Activated CD4-positive, alpha-beta memory T cell treated with anti-CD3 and anti-CD28 coated beads, Interleukin-2, amount 10 ng/mL, durations not matched to agents 7 days and 5 days (primary cell): ENCODE measurements at regions of chr17 and their contacts with region 1.

Region 1: DNA sequence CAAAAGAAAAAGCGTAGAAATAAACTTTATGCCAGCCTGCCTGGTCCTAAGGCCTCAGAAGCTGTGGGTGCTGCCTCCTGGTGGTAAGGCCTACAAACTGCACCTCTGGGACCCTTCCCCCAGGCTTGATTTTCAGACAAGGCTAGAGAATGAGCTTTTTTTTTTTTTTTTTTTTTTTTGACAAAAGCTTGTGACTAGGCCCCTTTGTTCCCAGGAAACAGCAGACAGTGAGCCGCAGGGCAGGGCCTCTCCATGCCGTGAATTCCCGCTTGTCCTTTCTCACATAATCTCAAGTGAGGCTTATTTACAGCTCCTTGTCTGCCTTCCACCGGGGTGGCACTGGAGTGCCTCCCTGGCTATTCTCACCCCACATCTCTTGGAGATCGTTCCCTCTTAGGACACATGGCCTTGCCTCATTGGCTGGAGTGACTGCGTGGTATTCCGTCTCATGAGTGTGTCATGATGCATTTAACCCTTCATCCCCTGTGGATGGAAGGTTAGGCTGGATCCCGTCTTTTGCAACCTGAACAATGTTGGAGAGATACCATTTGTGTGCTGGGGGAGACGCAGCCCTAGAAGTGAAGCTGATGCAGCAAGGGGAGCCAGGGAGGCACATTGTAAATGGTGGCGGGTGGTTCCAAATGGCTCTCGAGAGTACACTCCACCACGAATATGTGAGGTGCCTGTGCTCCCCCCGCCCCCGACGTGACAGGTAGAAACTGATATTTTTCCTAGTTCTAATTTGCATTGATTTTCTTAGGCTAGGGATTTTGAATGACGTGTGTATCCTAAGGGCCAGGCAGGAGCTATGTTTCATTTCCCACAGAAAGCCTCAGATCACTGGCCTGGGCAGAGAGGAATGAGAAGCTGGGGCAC is 49.6 kb downstream of the USP22 start:
- DNase-seq: peak; percentile 65
- H3K4me3 Mint-ChIP-seq: no peak overlapping the region
- H3K27ac Mint-ChIP-seq: no peak overlapping the region
- H3K4me1 Mint-ChIP-seq: no peaks in the 10 kb centered on the region
- H3K27me3 Mint-ChIP-seq: no peaks in the 10 kb centered on the region

Region 2: GRCh38 chr17:20800146-20800545 is 193.1 kb before region 1 on chr17:
- CTCF ChIA-PET with region 1: interaction called, 12 read pairs
- POLR2A ChIA-PET with region 1: interaction called, 4 read pairs
- DNase-seq: no peak
- H3K4me3 Mint-ChIP-seq: no peak overlapping the region
- H3K27ac Mint-ChIP-seq: no peak overlapping the region
- H3K4me1 Mint-ChIP-seq: peaks cover 38% of the 10 kb centered on the region
- H3K27me3 Mint-ChIP-seq: peaks cover under 1% of the 10 kb centered on the region

Region 3: GRCh38 chr17:20952184-20952583 is 41.0 kb before region 1 on chr17:
- CTCF ChIA-PET with region 1: no interaction called
- POLR2A ChIA-PET with region 1: no interaction called
- DNase-seq: no peak
- H3K4me3 Mint-ChIP-seq: no peak overlapping the region
- H3K27ac Mint-ChIP-seq: no peak overlapping the region
- H3K4me1 Mint-ChIP-seq: no peaks in the 10 kb centered on the region
- H3K27me3 Mint-ChIP-seq: peaks cover 18% of the 10 kb centered on the region

Region 4: DNA sequence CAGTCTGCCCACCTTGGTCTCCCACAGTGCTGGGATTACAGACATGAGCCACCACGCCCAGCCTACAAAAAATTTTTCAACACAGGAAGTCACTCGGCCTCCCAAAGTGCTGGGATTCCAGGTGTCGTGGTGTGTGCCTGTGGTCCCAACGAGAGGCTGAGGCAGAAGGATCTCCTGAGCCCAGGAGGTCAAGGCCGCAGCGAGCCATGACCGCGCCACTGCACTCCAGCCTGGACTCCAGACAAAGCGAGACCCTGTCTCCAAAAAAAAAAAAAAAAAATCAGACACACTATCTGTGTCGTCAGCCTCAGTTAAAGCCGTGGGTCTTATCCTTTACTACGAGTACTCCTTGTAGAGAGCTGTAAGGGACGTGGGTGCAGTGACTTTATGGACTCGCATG is 33.8 kb after region 1 on chr17:
- CTCF ChIA-PET with region 1: no interaction called
- POLR2A ChIA-PET with region 1: no interaction called
- DNase-seq: no peak
- H3K4me3 Mint-ChIP-seq: no peak overlapping the region
- H3K27ac Mint-ChIP-seq: no peak overlapping the region
- H3K4me1 Mint-ChIP-seq: peaks cover 66% of the 10 kb centered on the region
- H3K27me3 Mint-ChIP-seq: no peaks in the 10 kb centered on the region

Region 5: DNA sequence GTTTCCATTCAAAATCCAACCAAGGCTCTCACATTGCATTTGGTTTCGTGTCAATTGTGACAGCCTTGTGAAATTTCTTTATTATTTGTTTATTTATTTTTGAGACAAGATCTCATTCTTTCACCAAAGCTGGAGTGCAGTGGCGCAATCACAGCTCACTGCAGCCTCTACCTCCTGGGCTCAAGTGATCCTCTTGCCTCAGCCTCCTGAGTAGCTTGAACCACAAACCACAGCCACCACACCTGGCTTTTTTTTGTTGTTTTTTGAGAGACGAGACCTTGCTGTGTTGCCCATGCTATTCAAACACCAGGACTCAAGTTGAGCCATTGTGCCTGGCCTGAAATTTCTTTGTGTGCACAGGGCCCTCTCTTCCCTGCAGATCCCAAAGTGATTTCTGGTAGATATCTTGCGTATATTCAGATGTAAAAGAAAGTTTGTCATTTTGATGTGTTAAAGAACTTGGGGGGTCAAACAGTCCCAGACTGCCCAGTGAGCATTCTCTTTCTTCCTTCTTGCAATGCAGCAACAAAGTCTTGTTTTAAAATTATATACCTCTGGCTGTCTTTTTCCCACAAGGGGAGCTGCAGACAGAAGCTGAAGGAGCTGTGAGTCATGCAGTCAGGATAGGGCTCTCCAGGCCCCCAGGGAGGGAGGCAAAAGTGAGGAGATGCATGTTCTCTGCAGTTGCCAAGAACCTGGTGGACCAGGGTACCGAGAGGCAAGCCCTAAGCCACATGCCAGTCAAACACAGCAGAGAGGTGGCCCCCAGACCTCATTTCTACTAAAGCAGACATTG is 65.1 kb after region 1 on chr17:
- CTCF ChIA-PET with region 1: interaction called, 12 read pairs
- POLR2A ChIA-PET with region 1: no interaction called
- DNase-seq: no peak
- H3K4me3 Mint-ChIP-seq: no peak overlapping the region
- H3K27ac Mint-ChIP-seq: no peak overlapping the region
- H3K4me1 Mint-ChIP-seq: peaks cover 4% of the 10 kb centered on the region
- H3K27me3 Mint-ChIP-seq: peaks cover 10% of the 10 kb centered on the region